Activated CD8-positive, alpha-beta T cell treated with anti-CD3 and anti-CD28 coated beads, Interleukin-2, amount 10 ng/mL, durations not matched to agents 7 days and 5 days (primary cell): ENCODE measurements at regions of chr5 and their contacts with region 1.

Region 1: DNA sequence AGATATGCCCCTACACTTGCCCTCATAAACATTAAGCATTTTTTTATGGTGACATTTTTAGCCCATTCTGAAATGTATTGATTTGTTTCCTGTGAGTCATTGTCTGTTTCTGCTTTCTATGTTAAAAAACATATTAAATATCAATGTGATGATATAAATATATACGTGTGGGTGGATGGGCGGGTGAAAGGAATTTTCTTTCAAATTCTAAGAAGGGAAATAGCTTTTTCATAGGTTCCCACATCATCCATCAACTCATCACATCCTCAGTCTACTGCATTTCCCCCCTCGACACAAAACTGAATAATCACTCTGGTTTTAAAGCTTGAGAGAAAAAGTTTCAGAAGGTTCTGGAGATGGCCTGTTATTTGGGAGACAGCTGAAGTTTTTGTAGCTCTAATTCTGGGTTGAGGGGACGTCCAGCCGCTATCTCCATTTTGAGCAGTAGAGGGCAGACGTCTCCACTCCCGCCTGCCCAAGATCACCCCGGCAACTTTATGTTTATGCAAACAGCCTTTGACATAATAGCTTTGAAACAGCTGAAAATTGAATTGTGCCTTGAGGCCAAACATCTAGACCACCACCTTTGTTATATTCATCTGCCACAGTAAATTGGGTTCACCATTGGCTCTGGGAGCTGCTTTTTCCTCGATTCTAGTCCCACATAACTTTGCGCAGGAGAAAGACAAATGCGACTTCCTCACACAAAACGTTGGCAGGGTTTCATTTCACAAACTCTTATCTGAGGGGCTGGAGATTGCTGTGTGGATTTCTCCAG is 216.2 kb upstream of the CLINT1 start:
- DNase-seq: peak; percentile 63
- ATAC-seq: peak; percentile 81
- H3K4me3 Mint-ChIP-seq: no peak overlapping the region
- H3K27ac Mint-ChIP-seq: no peak overlapping the region
- H3K4me1 Mint-ChIP-seq: no peaks in the 10 kb centered on the region
- H3K27me3 Mint-ChIP-seq: peaks cover 10% of the 10 kb centered on the region

Region 2: DNA sequence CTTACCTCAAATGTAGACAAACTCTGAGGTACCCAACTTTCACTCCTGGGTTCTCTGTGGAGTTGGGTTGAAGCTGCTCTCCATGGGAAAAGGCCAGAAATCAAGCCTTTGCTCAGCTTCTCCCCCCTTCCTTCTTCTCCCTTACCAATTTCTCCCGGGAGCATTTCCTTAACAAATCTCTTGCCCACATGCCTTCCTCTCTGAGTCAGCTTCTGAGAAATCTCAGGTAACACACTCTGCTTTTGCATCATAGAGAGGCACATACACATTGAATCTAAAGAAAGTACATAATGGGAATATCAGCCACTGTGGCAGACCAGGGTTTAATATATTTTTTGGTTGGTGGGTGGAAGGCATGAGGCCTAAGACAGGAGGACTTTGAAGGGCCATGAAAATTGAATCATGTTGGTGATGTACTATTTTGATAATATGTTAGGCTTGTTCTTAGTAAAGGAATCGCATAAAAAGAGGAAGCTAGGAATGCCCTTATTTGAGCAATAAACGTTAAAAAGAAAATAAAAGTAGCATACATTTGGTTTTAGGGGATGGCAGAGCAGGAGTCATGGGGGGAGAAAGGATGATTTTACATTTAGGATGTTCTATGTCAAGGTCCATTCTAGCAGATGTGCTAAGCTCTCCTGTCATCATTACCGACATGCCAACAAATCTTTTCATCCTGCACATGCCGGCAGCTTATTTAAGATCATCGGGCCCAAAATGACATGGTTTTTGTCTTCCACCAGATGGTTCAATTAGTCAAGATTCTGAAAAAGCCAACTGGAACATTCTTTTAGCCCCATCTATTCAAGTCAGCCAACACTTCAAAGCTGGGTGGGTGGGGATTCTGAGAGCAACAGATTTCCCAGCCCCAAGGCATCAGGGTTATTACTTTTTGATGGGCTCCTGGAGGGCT is 16.7 kb before region 1 on chr5:
- CTCF ChIA-PET with region 1: interaction called, 55 read pairs
- POLR2A ChIA-PET with region 1: no interaction called
- DNase-seq: no peak
- ATAC-seq: no peak
- H3K4me3 Mint-ChIP-seq: no peak overlapping the region
- H3K27ac Mint-ChIP-seq: no peak overlapping the region
- H3K4me1 Mint-ChIP-seq: no peaks in the 10 kb centered on the region
- H3K27me3 Mint-ChIP-seq: peaks cover 20% of the 10 kb centered on the region